Psoas muscle (tissue), 8 donors: ENCODE measurements at regions of chr22 and their contacts with region 1.

Region 1: DNA sequence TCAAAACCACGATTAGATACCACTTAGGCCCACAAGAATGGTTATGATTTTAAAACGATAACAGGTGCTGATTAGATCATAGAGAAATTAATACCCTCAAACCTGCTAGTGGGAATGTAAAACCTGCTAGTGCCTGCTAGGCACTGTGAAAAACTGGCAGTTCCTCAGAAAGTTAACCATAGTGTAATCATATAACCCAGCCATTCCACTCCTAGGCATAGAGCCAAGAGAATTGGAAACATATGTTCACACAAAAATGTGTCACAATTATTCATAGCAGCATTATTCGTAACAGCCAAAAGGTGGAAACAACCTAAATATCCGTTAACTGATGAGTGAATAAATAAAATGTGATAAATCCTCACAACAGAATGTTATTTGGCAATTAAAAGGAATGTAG is 122.2 kb upstream of the SYN3 start:
- DNase-seq: no peak
- ATAC-seq: no peak
- H3K4me3 ChIP-seq: no peak overlapping the region
- H3K27ac ChIP-seq: no peak overlapping the region
- H3K4me1 ChIP-seq: no peaks in the 10 kb centered on the region
- H3K27me3 ChIP-seq: no peaks in the 10 kb centered on the region
- CTCF ChIP-seq: no peak

Region 2: GRCh38 chr22:33076343-33076742 is 104.0 kb before region 1 on chr22:
- intact Hi-C with region 1: no loop called
- DNase-seq: no peak
- ATAC-seq: no peak
- H3K4me3 ChIP-seq: no peak overlapping the region
- H3K27ac ChIP-seq: no peak overlapping the region
- H3K4me1 ChIP-seq: no peaks in the 10 kb centered on the region
- H3K27me3 ChIP-seq: peaks cover 0 to 2% (median 0%) of the 10 kb centered on the region in 3 donors
- CTCF ChIP-seq: no peak

Region 3: DNA sequence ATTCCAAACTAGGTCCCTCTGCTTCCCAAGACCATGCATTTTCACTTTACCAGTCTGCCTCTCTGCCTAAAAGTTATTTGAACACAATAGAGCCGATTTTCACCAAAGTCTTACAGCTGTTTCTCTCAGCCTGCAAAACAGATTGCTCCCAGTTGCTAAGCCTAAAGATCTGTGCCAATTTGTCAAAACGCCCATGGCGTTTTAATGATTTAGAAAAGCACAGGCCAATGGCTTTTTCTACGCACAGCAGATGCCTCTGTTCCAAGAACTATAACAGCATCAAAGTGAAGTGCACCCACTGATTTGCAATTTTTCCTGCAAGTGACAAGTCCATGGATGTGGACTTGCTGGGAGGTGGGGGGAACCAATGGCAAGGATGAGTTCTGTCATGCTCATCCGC is 51.7 kb after region 1 on chr22:
- intact Hi-C with region 1: loop called in 1 of 2 experiments (anchors 10 kb)
- DNase-seq: no peak
- ATAC-seq: no peak
- H3K4me3 ChIP-seq: no peak overlapping the region
- H3K27ac ChIP-seq: no peak overlapping the region
- H3K4me1 ChIP-seq: no peaks in the 10 kb centered on the region
- H3K27me3 ChIP-seq: no peaks in the 10 kb centered on the region
- CTCF ChIP-seq: no peak

Region 4: GRCh38 chr22:33569018-33569417 is 388.7 kb after region 1 on chr22:
- intact Hi-C with region 1: no loop called
- DNase-seq: no peak
- ATAC-seq: no peak
- H3K4me3 ChIP-seq: no peak overlapping the region
- H3K27ac ChIP-seq: no peak overlapping the region
- H3K4me1 ChIP-seq: peaks cover 5% of the 10 kb centered on the region
- H3K27me3 ChIP-seq: no peaks in the 10 kb centered on the region
- CTCF ChIP-seq: no peak